ENCODE measurements at regions of chr17 and their contacts with region 1.

Region 1: GRCh38 chr17:17125136-17126084 is 80.7 kb downstream of the PLD6 start:
- DNase-seq: no peak
- H3K4me3 ChIP-seq: no peak overlapping the region
- H3K27ac ChIP-seq: peak overlapping the region in 1 of 2 donors; percentile 35
- H3K4me1 ChIP-seq: peaks cover 0 to 8% of the 10 kb centered on the region in 2 donors
- H3K27me3 ChIP-seq: no peaks in the 10 kb centered on the region
- CTCF ChIP-seq: no peak
- POLR2A ChIP-seq: no peak

Region 2: DNA sequence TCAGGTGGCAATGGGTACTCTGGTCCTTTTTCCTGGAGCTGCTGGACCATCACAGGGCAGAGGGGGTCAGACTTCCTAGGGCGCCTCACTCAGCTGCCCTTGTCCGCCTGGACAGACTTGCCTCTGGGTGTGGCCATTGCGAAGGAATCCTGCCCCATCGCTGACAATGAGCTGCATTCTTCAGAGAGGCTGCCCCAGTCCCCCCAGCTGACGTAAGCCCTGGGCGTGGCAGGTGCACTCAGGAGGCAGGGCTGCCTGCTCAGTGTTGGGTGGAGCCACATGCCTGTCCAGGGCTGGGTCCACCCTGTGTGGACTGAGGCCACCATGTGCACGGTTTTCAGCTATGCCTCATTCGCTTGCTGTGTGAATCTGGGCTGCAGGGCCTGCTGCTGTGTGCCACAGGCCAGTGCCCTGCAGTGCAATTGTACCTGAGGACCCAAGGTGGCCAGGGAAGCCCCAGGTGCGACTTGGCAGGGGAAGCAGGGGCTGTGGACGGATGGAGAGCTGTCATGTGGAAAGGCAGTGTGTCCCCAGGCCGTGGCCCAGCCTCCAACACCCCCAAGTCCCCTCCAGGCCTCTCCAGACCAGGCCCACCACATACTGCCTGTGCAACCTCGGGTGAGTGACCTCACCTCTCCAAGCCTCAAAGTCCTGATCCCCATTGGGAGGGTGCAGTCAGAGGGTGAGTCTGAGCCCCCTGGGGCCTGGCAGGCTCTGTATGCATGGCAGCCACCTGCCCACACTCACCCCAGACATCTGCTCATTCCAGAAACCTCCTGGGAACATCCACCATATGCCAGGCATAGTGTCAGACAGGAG is 97.1 kb before region 1 on chr17:
- intact Hi-C with region 1: no loop called
- DNase-seq: peak; percentile 62 to 92
- H3K4me3 ChIP-seq: no peak overlapping the region
- H3K27ac ChIP-seq: peak overlapping the region; percentile 11 to 27
- H3K4me1 ChIP-seq: peaks cover 0 to 14% of the 10 kb centered on the region in 2 donors
- H3K27me3 ChIP-seq: no peaks in the 10 kb centered on the region
- CTCF ChIP-seq: no peak
- POLR2A ChIP-seq: no peak

Region 3: GRCh38 chr17:17058304-17058703 is 67.1 kb before region 1 on chr17:
- intact Hi-C with region 1: loop called (anchors 2 kb)
- DNase-seq: peak in 1 of 2 donors; percentile 37
- H3K4me3 ChIP-seq: no peak overlapping the region
- H3K27ac ChIP-seq: peak overlapping the region in 1 of 2 donors; percentile 10
- H3K4me1 ChIP-seq: peaks cover 16 to 28% of the 10 kb centered on the region in 2 donors
- H3K27me3 ChIP-seq: no peaks in the 10 kb centered on the region
- CTCF ChIP-seq: no peak
- POLR2A ChIP-seq: no peak

Region 4: DNA sequence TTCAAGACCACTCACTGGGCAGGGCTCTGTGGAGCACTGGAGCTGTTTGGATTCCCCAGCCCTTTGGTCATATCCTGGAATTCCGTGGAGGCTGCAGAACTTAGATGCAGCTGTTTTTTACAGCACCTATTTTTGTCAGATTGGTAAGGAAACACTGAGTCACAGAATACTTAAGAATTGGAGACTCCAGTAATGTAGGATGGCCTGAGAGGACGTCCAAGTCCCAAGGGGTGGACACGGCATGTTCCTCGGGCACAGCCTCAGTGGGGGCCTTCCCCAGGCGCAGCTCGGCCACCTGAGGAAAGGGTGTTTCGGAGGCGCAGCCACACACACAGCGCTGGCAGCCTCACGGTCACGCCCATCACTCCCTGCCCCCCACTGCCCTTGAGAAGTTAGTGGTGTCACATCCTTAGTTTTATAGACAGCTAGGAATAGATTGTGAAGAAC is 66.0 kb after region 1 on chr17:
- intact Hi-C with region 1: no loop called
- DNase-seq: no peak
- H3K4me3 ChIP-seq: no peak overlapping the region
- H3K27ac ChIP-seq: no peak overlapping the region
- H3K4me1 ChIP-seq: peaks cover 0 to 7% of the 10 kb centered on the region in 2 donors
- H3K27me3 ChIP-seq: no peaks in the 10 kb centered on the region
- CTCF ChIP-seq: no peak
- POLR2A ChIP-seq: no peak

Region 5: DNA sequence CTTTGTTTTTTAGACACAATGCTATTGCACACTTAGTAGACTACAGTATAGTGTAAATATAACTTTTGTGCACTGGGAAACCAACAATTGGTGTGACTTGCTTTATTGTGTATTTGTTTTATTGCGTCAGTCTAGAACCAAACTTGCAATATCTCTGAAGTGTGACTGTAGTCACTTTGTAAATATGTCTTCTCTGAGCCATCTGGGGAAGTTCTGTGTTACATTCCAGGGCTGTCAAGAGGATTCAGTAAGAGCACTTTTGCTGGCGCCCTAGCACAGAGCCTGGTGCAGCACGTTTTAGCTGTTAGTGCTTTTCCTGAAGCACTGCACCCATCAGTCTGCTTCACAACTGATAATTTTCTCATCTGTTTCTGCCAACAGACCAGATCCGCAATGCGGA is 251.0 kb after region 1 on chr17:
- intact Hi-C with region 1: no loop called
- DNase-seq: no peak
- H3K4me3 ChIP-seq: no peak overlapping the region
- H3K27ac ChIP-seq: peak overlapping the region in 1 of 2 donors; percentile 82
- H3K4me1 ChIP-seq: no peaks in the 10 kb centered on the region
- H3K27me3 ChIP-seq: no peaks in the 10 kb centered on the region
- CTCF ChIP-seq: no peak
- POLR2A ChIP-seq: no peak